ENCODE measurements at regions of chr2 and their contacts with region 1.

Region 1: DNA sequence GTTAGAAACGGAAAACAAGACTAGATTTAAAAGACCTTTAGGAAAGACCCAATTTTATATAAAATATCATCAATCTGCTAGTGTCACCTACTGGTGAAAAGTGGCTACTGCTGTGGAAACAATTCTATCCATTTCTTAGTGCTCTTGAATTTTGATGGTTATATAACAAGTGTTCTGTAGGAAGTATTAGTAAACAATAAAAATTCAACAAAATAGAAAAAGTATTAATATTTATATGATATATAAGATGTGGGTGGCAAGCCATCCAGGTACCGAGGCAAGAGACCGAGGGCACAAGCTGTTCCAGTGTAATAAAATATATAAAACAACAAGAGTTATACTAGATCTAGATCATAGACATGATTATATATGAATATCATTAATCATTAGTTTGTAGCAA is 6.2 kb upstream of the TMEM87B start:
- DNase-seq: peak; percentile 42 to 71 (median 50)
- ATAC-seq: peak; percentile 90
- H3K4me3 ChIP-seq: no peak overlapping the region
- H3K27ac ChIP-seq: no peak overlapping the region
- H3K4me1 ChIP-seq: peaks cover 22% of the 10 kb centered on the region
- H3K27me3 ChIP-seq: no peaks in the 10 kb centered on the region
- CTCF ChIP-seq: peak; percentile 54 to 97 (median 87)
- POLR2A ChIP-seq: no peak

Region 2: DNA sequence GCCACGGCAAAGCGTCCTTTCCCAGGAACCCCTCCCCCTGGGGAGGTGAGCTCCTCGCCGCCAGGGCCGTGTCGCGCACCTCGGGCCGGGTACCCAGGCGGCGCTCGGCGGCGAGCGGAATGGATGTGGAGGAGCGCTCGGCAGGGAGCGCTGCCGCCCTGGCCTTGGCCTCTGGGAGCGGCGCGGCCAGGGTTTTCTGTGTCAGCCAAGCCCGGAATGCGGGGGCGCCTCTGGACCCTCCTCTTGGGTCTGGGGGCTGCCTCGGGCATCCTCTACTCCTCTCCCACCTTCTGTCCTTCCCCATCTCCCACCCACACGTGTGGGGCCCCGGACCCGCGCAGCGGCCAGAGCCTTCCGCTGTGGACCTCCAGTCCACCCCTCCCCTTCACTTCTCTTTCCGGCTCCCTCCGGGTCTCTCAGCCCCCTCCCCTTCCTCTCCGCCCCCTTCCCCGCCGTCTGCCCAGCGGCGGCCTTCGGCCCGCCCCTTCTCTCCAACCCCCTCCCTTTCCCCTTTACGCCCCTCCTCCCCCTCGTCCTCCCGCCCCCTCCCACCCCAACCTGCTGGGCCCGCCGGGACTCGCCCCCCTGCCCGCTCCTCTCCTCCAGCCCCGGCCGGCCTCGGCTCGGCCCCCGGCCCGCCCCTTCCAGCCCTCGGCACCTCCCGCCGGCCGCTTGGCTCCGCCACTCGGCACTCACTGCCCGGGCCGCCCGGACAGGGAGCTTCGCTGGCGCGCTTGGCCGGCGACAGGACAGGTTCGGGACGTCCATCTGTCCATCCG is 150.8 kb before region 1 on chr2 and contains the start of gene MERTK:
- intact Hi-C with region 1: loop called (anchors 5 kb)
- DNase-seq: peak; percentile 83 to 89 (median 88)
- ATAC-seq: peak; percentile 85
- H3K4me3 ChIP-seq: peak within 1 kb of the TSS; percentile 78 to 88
- H3K27ac ChIP-seq: peak within 1 kb of the TSS; percentile 75 to 87 (median 78)
- H3K4me1 ChIP-seq: peaks cover 31% of the 10 kb centered on the region
- H3K27me3 ChIP-seq: no peaks in the 10 kb centered on the region
- CTCF ChIP-seq: peak; percentile 36 to 80 (median 66)
- POLR2A ChIP-seq: peak; percentile 72 to 89 (median 85)
- total RNA-seq, gene MERTK: 7.9 to 9.6 TPM

Region 3: DNA sequence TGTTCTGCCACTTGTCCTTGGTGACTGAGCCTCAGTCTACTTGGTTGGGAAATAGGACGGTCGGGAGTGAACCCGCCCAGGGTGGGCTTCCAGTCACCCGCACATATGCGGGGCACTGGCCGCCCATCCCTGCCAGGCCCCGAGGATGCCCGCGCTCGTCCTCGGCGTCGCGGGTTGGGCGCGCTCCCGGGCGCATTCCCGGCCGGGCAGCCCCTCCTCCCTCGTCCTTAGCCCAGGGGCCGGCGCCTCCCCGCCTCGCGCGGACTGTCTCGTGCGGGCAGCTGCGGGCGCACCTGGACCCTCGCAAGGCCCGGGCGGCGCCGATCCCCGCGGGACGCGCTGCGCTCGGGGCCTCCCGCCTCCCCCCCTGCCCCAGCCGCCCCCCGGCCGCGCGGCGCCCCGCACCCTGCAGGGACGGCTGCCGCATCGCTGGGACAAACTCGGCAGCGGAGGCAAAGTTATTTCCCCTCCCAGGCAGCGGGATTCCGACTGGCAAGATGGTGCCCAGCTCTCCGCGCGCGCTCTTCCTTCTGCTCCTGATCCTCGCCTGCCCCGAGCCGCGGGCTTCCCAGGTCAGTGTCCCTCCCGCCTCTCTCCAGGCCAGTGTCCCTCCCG is 89.4 kb after region 1 on chr2 and contains the start of gene FBLN7:
- intact Hi-C with region 1: no loop called
- DNase-seq: no peak
- ATAC-seq: peak; percentile 63
- H3K4me3 ChIP-seq: peak within 1 kb of the TSS in 1 of 2 donors; percentile 5
- H3K27ac ChIP-seq: no peak within 1 kb of the TSS
- H3K4me1 ChIP-seq: peaks cover 11% of the 10 kb centered on the region
- H3K27me3 ChIP-seq: no peaks in the 10 kb centered on the region
- CTCF ChIP-seq: no peak
- POLR2A ChIP-seq: peak in 1 of 3 donors; percentile 5
- total RNA-seq, gene FBLN7: 1.3 to 3.9 TPM

Measured in body of pancreas (tissue), 4 donors.